ENCODE measurements at regions of chr1 and their contacts with region 1.

Region 1: GRCh38 chr1:100921109-100921706 is 25.3 kb downstream of the SLC30A7 start:
- DNase-seq: no peak
- ATAC-seq: peak; percentile 75
- H3K4me3 ChIP-seq: no peak overlapping the region
- H3K27ac ChIP-seq: no peak overlapping the region
- H3K4me1 ChIP-seq: no peaks in the 10 kb centered on the region
- H3K27me3 ChIP-seq: no peaks in the 10 kb centered on the region
- CTCF ChIP-seq: peak; percentile 79

Region 2: DNA sequence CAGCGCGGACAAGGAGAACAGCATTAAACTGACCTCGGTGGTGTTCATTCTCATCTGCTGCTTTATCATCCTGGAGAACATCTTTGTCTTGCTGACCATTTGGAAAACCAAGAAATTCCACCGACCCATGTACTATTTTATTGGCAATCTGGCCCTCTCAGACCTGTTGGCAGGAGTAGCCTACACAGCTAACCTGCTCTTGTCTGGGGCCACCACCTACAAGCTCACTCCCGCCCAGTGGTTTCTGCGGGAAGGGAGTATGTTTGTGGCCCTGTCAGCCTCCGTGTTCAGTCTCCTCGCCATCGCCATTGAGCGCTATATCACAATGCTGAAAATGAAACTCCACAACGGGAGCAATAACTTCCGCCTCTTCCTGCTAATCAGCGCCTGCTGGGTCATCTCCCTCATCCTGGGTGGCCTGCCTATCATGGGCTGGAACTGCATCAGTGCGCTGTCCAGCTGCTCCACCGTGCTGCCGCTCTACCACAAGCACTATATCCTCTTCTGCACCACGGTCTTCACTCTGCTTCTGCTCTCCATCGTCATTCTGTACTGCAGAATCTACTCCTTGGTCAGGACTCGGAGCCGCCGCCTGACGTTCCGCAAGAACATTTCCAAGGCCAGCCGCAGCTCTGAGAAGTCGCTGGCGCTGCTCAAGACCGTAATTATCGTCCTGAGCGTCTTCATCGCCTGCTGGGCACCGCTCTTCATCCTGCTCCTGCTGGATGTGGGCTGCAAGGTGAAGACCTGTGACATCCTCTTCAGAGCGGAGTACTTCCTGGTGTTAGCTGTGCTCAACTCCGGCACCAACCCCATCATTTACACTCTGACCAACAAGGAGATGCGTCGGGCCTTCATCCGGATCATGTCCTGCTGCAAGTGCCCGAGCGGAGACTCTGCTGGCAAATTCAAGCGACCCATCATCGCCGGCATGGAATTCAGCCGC is 318.2 kb after region 1 on chr1:
- intact Hi-C with region 1: loop called (anchors 5 kb)
- DNase-seq: no peak
- ATAC-seq: peak; percentile 3
- H3K4me3 ChIP-seq: peak overlapping the region; percentile 62
- H3K27ac ChIP-seq: peak overlapping the region; percentile 78
- H3K4me1 ChIP-seq: peaks cover 3% of the 10 kb centered on the region
- H3K27me3 ChIP-seq: no peaks in the 10 kb centered on the region
- CTCF ChIP-seq: peak; percentile 17

Region 3: DNA sequence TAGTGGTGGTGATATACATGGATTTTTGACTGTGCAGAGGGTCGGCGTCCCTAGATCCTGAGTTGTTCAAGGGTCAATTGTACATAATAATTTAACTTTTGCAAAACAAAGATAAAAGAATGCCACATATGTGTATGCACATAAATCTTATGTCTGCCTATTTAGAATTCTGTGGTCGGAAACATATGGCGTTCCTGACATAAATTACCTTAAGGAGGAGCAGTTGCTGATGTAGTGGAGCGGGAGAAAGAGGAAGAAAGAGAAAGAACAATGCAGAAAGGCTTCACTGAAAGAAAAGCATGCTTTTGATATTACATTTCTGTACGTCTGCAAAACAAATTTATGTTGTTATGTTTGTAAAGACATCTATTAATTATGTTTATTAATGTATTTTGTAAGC is 355.6 kb after region 1 on chr1:
- intact Hi-C with region 1: no loop called
- DNase-seq: no peak
- ATAC-seq: no peak
- H3K4me3 ChIP-seq: no peak overlapping the region
- H3K27ac ChIP-seq: no peak overlapping the region
- H3K4me1 ChIP-seq: no peaks in the 10 kb centered on the region
- H3K27me3 ChIP-seq: no peaks in the 10 kb centered on the region
- CTCF ChIP-seq: no peak

Region 4: GRCh38 chr1:101288491-101288944 is 367.3 kb after region 1 on chr1:
- intact Hi-C with region 1: loop called (anchors 5 kb)
- DNase-seq: no peak
- ATAC-seq: peak; percentile 93
- H3K4me3 ChIP-seq: no peak overlapping the region
- H3K27ac ChIP-seq: no peak overlapping the region
- H3K4me1 ChIP-seq: peaks cover 5% of the 10 kb centered on the region
- H3K27me3 ChIP-seq: no peaks in the 10 kb centered on the region
- CTCF ChIP-seq: peak; percentile 98